ENCODE measurements at regions of chr18 and their contacts with region 1.

Region 1: GRCh38 chr18:23619388-23619881 is 33.1 kb upstream of the NPC1 start:
- DNase-seq: peak; percentile 44
- CTCF ChIP-seq: peak; percentile 19

Region 2: DNA sequence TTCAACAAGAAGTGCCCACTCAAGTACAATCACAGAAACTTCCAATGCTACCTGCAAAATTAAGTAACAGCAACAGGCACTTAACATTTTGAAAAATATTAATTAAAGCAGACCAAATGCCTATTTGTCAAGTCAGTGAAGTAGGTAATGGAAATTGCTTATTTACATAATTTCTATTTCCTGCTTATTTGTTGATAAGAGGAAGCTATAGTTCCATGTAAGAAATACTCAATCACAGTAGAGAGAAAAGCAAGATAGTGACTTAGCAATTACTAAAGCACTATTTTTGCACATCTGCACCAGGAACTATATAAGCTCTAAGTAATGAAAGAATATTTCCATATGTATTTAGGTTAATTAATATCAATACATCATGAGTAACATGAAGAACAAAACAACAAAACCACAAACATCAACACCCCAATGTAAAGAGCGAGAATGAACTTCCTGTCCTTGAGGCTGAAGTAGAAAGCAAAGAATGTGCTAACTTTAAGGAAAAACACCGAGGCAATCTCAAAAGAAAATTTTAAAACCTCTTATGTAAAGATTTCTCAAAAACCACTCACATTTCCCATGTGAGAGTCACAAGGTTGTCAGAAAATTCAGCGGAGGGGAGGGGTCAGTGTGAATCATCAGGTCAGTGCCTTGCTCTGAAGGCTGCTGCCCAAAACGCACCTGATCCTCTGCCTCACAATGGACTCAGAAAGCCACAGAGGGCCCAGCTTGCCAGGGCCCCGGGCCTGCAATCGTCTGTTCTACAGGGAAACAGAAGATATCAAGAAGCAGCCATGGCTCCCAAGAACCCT is 45.6 kb before region 1 on chr18:
- CTCF ChIA-PET with region 1: no interaction called
- POLR2A ChIA-PET with region 1: no interaction called
- DNase-seq: no peak
- CTCF ChIP-seq: no peak

Region 3: DNA sequence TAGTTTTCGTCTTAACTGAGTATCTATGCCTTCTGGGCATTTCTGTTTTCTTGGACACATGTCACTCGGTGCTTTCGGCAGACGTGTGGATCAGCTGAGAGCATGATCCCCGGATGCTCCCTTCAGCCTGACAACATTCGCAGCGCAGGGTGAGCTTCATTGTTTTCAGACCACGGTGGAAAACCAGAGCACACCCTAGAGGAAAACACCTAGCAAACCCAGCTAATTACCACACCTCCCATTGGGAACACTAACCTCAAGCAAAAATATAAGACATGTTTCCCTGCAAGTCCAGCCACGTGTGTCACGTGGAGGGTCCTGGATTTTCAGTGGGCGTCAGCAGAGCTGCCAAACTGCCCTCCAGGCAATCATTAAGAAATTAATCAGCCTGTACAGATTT is 12.3 kb after region 1 on chr18:
- CTCF ChIA-PET with region 1: interaction called, 10 read pairs
- POLR2A ChIA-PET with region 1: no interaction called
- DNase-seq: no peak
- CTCF ChIP-seq: no peak